Psoas muscle (tissue), 8 donors: ENCODE measurements at regions of chr12 and their contacts with region 1.

Region 1: DNA sequence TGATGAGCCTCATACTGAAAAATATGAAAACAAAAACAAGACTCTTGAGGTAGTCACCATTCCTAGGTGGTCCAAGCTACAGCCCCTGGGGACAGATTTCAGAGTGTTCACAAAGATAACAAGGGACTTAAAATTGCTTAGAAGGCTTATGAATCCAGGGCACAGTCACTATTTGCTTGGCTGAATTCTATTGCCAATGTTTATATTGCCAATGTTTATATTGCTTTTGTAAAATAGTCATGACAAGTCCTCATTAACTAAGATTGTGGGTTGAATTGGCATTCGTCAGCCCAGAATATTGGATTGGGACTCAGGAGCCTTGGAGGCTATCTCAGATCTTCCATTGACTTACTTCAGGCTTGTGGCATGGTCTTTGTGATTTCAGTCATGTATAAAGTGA is 6.4 kb downstream of the TMEM117 start:
- DNase-seq: no peak
- ATAC-seq: no peak
- H3K4me3 ChIP-seq: no peak overlapping the region
- H3K27ac ChIP-seq: no peak overlapping the region
- H3K4me1 ChIP-seq: peaks cover 8% of the 10 kb centered on the region
- H3K27me3 ChIP-seq: no peaks in the 10 kb centered on the region
- CTCF ChIP-seq: no peak

Region 2: DNA sequence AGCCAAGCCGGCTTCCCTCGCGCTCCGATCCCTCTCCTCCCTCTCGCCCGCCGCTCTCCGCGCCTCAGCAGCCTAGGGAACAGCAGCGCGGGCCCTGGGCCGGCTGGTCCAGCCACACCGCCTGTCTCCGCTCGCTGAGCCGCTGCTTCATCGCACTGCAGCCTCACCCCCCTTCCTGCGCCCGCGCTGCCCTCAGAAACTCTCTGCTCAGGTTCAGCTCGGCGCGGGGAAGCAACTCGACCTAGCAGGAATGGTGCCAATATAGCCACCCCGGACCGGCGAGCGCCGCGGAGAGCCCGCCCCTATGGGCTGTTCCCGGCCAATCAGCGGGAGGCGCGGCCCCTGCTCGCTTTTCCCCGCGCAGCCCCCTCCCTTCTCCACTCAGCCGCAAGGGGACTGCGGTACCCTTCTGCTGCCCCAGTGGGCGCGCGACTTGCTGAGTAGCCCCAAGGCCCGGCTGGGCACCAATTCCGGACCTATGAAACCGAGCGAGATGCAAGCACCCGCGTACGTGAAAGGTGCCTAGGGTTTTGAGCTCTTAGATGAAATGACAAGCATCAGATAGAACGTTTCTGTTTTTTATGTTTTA is 290.2 kb before region 1 on chr12 and contains the start of gene ADAMTS20:
- intact Hi-C with region 1: no loop called
- DNase-seq: no peak
- ATAC-seq: peak in 2 of 4 donors; percentile 13 to 33
- H3K4me3 ChIP-seq: peak within 1 kb of the TSS; percentile 46
- H3K27ac ChIP-seq: no peak within 1 kb of the TSS
- H3K4me1 ChIP-seq: no peaks in the 10 kb centered on the region
- H3K27me3 ChIP-seq: peaks cover 0 to 25% (median 13%) of the 10 kb centered on the region in 3 donors
- CTCF ChIP-seq: no peak
- total RNA-seq, gene ADAMTS20: not detected

Region 3: GRCh38 chr12:43872396-43872795 is 30.1 kb after region 1 on chr12:
- intact Hi-C with region 1: loop called in 1 of 2 experiments (anchors 2 kb)
- DNase-seq: no peak
- ATAC-seq: no peak
- H3K4me3 ChIP-seq: no peak overlapping the region
- H3K27ac ChIP-seq: no peak overlapping the region
- H3K4me1 ChIP-seq: no peaks in the 10 kb centered on the region
- H3K27me3 ChIP-seq: no peaks in the 10 kb centered on the region
- CTCF ChIP-seq: no peak

Region 4: GRCh38 chr12:45327823-45328383 is 1485.6 kb after region 1 on chr12:
- intact Hi-C with region 1: no loop called
- DNase-seq: no peak
- ATAC-seq: peak in 3 of 4 donors; percentile 8 to 26 (median 18)
- H3K4me3 ChIP-seq: no peak overlapping the region
- H3K27ac ChIP-seq: peak overlapping the region; percentile 77
- H3K4me1 ChIP-seq: peaks cover 58% of the 10 kb centered on the region
- H3K27me3 ChIP-seq: no peaks in the 10 kb centered on the region
- CTCF ChIP-seq: no peak